Activated CD4-positive, alpha-beta memory T cell treated with anti-CD3 and anti-CD28 coated beads, Interleukin-2, amount 10 ng/mL, durations not matched to agents 7 days and 5 days (primary cell): ENCODE measurements at regions of chr12 and their contacts with region 1.

Region 1: GRCh38 chr12:12837025-12837872 is 24.1 kb downstream of the DDX47 start:
- DNase-seq: peak; percentile 50
- H3K4me3 Mint-ChIP-seq: no peak overlapping the region
- H3K27ac Mint-ChIP-seq: no peak overlapping the region
- H3K4me1 Mint-ChIP-seq: peaks cover 33% of the 10 kb centered on the region
- H3K27me3 Mint-ChIP-seq: no peaks in the 10 kb centered on the region

Region 2: DNA sequence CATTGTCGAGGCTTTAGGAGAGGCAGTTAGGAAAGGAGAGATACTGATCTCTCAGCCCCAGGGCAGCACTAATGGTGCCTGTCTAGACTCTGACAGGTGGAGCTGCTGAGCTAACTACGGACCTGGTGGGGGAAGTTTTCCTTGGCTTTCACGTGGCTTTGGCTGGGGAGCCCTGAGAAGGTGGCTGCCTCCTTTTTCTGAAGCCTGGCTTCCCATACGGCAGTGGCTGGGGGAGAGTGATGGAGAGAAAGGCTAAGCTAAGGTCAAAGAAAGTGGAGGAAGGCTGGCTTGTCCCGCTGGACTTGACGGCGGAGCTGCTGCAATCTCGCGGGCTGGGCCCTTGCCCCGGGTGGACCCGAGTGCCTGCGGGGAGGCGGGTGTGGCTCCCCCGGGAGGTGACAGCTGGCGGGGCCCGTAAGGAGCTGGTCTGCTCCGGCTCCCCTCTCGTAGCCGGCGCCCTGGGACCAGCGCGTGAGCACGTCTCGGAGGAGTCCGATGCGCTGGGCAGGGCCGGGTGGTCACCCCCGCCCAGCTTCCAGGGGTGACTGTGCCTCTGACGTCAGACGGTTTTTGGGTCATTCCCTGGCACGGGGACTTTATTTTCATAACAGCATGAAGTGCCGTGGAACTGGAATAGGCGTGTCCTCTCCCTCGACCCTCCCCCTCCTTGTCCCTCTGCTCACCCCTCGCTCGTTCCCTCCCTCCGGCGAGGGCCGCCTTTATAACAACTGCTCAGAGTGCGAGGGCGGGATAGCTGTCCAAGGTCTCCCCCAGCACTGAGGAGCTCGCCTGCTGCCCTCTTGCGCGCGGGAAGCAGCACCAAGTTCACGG is 53.8 kb after region 1 on chr12 and contains the start of gene GPRC5A:
- CTCF ChIA-PET with region 1: interaction called, 10 read pairs
- POLR2A ChIA-PET with region 1: no interaction called
- DNase-seq: peak; percentile 29
- H3K4me3 Mint-ChIP-seq: peak within 1 kb of the TSS; percentile 66
- H3K27ac Mint-ChIP-seq: no peak within 1 kb of the TSS
- H3K4me1 Mint-ChIP-seq: peaks cover 13% of the 10 kb centered on the region
- H3K27me3 Mint-ChIP-seq: peaks cover 56% of the 10 kb centered on the region
- total RNA-seq, gene GPRC5A: 0.03 to 0.05 TPM